A549 (cell line): ENCODE measurements at regions of chr17 and their contacts with region 1.

Region 1: GRCh38 chr17:4540224-4540641 is 15.0 kb downstream of the MYBBP1A start:
- DNase-seq: no peak
- ATAC-seq: peak in 1 of 2 experiments; percentile 24; a peak in 3 of 6 replicates
- H3K4me3 ChIP-seq: no peak overlapping the region
- H3K27ac ChIP-seq: no peak overlapping the region
- H3K4me1 ChIP-seq: peaks cover 1% of the 10 kb centered on the region; the same call in 2 of the 3 replicates
- CTCF ChIP-seq: peak; percentile 36
- EP300 ChIP-seq: no peak
- POLR2A ChIP-seq: no peak
- RAD21 ChIP-seq: 0 out of 5 replicates have a peak, but pooled peaks of 1 of the 2 experiments have one; percentile 20

Region 2: GRCh38 chr17:4513112-4513994 is 26.9 kb before region 1 on chr17:
- CTCF ChIA-PET with region 1: no interaction called
- POLR2A ChIA-PET with region 1: no interaction called
- DNase-seq: no peak
- ATAC-seq: peak; percentile 28 to 37; a peak in 4 of 6 replicates
- H3K4me3 ChIP-seq: no peak overlapping the region
- H3K27ac ChIP-seq: peak overlapping the region in 1 of 2 experiments; percentile 31; a peak in 2 of 6 replicates
- H3K4me1 ChIP-seq: no peaks in the 10 kb centered on the region
- CTCF ChIP-seq: no peak
- EP300 ChIP-seq: no peak
- POLR2A ChIP-seq: no peak
- RAD21 ChIP-seq: no peak

Region 3: DNA sequence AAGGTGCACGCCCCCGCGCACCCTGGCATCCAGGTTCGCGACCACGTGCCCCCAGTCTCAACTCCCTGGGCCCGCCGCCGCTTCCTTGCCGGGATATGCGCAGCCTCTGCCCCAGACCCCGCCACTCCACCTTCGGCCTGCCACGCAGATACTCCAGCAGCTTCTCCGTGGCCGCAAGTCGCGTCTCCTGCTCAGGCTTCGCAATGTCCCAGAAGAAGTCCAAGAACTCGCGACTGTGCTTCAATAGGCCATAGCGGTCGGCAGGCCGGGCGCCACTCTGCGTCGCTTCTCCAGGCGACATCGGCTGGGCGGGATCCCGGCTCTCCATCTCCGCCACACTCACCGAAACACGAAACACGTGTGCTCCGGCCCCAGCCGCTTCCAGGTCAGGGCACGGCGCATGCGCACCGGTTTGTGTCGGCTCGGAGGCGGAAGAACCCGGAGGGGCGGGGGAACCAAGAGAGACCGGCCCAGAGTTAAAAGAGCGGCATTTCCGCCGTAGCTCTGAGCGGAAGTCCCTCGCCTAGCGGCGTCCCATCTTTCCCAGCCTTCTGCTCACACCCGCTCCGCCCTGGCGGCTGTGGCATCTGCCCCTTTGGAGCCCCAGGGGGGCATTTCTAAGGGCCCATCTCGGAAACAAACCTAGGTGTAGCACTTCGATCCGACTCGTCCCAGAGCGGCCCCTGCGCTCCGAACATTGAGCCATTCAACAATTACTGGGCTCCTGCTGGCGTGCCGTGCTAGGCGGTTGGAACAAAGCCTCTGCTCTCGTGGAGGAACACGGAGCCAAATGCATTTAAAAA is 15.0 kb after region 1 on chr17 and contains the start of gene MYBBP1A:
- CTCF ChIA-PET with region 1: interaction called, 5 read pairs
- POLR2A ChIA-PET with region 1: interaction called, 13 read pairs
- DNase-seq: peak; percentile 97 to 100
- ATAC-seq: peak; percentile 92 to 97
- H3K4me3 ChIP-seq: peak within 1 kb of the TSS; percentile 92
- H3K27ac ChIP-seq: peak within 1 kb of the TSS; percentile 84 to 89
- H3K4me1 ChIP-seq: peaks cover 16% of the 10 kb centered on the region
- CTCF ChIP-seq: no peak
- EP300 ChIP-seq: no peak
- POLR2A ChIP-seq: peak; percentile 91
- RAD21 ChIP-seq: no peak
- polyA plus RNA-seq, gene MYBBP1A: 39.7 and 42.9 TPM in 2 replicates

Region 4: DNA sequence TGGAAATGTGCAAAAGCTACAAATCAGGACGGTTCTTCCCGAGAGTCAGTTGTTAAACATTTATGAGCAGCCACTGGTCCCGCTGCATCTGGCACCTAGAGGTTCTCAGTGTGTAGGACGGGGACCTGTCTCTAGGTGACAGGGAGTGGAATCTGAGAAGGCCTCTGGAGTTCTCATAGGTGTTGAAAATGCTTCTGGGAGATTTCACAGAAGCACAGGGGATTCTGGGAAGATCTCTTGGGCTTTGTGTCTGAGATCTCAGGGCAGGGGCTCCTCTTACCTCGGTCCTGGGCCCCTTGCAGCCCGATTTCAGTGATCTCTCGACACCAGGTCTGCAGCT is 92.3 kb after region 1 on chr17:
- CTCF ChIA-PET with region 1: no interaction called
- POLR2A ChIA-PET with region 1: no interaction called
- DNase-seq: peak in 1 of 2 experiments; percentile 28
- ATAC-seq: peak; percentile 23 to 49; a peak in 4 of 6 replicates
- H3K4me3 ChIP-seq: no peak overlapping the region
- H3K27ac ChIP-seq: no peak overlapping the region
- H3K4me1 ChIP-seq: no peaks in the 10 kb centered on the region
- CTCF ChIP-seq: no peak
- EP300 ChIP-seq: no peak
- POLR2A ChIP-seq: no peak
- RAD21 ChIP-seq: no peak

Region 5: GRCh38 chr17:4672751-4673150 is 132.5 kb after region 1 on chr17:
- CTCF ChIA-PET with region 1: no interaction called
- POLR2A ChIA-PET with region 1: no interaction called
- DNase-seq: no peak
- ATAC-seq: no peak; a peak in 1 of 6 replicates
- H3K4me3 ChIP-seq: no peak overlapping the region
- H3K27ac ChIP-seq: no peak overlapping the region
- H3K4me1 ChIP-seq: peaks cover 6% of the 10 kb centered on the region; the same call in 2 of the 3 replicates
- CTCF ChIP-seq: no peak
- EP300 ChIP-seq: no peak
- POLR2A ChIP-seq: no peak
- RAD21 ChIP-seq: no peak